Dorsolateral prefrontal cortex (tissue), 120 donors: ENCODE measurements at regions of chrX and their contacts with region 1.

Region 1: DNA sequence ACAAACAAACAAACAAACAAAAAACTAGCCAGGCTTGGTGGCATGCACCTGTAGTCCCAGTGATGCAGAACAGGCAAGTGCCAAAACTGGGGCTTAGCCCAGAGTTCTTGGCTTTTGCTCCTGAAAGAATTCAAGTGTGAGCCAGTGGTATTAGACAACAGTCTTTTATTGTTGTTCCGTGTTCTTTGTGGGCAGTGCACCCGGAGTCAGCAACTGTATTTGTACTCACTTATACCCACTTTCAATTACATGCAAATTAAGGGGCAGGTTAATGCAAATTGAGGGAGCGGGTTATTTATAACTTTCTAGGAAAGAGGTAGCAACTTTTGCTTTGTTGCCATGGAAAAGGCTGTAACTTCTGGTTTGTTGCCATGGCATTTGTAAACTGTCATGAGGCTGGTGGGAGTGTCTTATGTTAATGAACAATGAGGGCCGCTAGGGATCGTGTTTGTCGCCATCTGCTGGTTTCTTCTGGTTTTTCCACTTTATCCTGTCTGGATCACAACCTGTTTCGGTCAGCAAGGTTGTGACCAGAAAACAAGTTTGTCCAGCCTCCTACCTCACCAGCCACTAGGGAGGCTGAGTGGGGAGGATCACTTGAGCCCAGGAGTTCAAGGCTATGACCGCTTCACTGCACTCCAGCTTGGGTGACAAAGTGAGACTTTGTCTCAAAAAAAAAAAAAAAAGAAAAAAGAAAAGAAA is 88.8 kb upstream of the ESX1 start:
- DNase-seq: peak in 2 of 10 donors; percentile 14 to 35
- H3K4me3 ChIP-seq: no peak overlapping the region
- H3K27ac ChIP-seq: no peak overlapping the region
- H3K27me3 ChIP-seq: peaks cover 0 to 74% (median 24%) of the 10 kb centered on the region in 45 donors
- CTCF ChIP-seq: peak in 52 of 56 donors; percentile 19 to 70 (median 46)

Region 2: GRCh38 chrX:104309171-104309570 is 34.4 kb before region 1 on chrX:
- intact Hi-C with region 1: loop called in 1 of 2 experiments (anchors 5 kb)
- DNase-seq: no peak
- H3K4me3 ChIP-seq: no peak overlapping the region
- H3K27ac ChIP-seq: no peak overlapping the region
- H3K27me3 ChIP-seq: peaks cover 0 to 80% (median 23%) of the 10 kb centered on the region in 45 donors
- CTCF ChIP-seq: no peak